Activated T-helper 2 cell treated with anti-CD3 and anti-CD28 coated beads, Interferon-gamma antibody, Interleukin-2, Interleukin-4, amounts not matched to agents 10 μg/mL and 5 μg/mL and 100 μg/mL, durations not matched to agents 14 hours and 24 hours and 36 hours (primary cell): ENCODE measurements at regions of chr1 and their contacts with region 1.

Region 1: GRCh38 chr1:40951943-40952743 is 27.4 kb upstream of the CTPS1 start:
- DNase-seq: peak; percentile 40
- H3K4me3 Mint-ChIP-seq: no peak overlapping the region
- H3K27ac Mint-ChIP-seq: no peak overlapping the region
- H3K4me1 Mint-ChIP-seq: peaks cover 5% of the 10 kb centered on the region
- H3K27me3 Mint-ChIP-seq: peaks cover 22% of the 10 kb centered on the region

Region 2: GRCh38 chr1:40612345-40612831 is 339.8 kb before region 1 on chr1:
- intact Hi-C with region 1: loop called (anchors 10 kb)
- DNase-seq: peak; percentile 53
- H3K4me3 Mint-ChIP-seq: no peak overlapping the region
- H3K27ac Mint-ChIP-seq: no peak overlapping the region
- H3K4me1 Mint-ChIP-seq: no peaks in the 10 kb centered on the region
- H3K27me3 Mint-ChIP-seq: peaks cover 11% of the 10 kb centered on the region

Region 3: GRCh38 chr1:40774266-40774998 is 177.7 kb before region 1 on chr1:
- intact Hi-C with region 1: loop called (anchors 2 kb)
- DNase-seq: peak; percentile 41
- H3K4me3 Mint-ChIP-seq: no peak overlapping the region
- H3K27ac Mint-ChIP-seq: peak overlapping the region; percentile 46
- H3K4me1 Mint-ChIP-seq: peaks cover 5% of the 10 kb centered on the region
- H3K27me3 Mint-ChIP-seq: no peaks in the 10 kb centered on the region

Region 4: GRCh38 chr1:40849801-40850592 is 102.1 kb before region 1 on chr1:
- intact Hi-C with region 1: loop called (anchors 1 kb)
- DNase-seq: peak; percentile 73
- H3K4me3 Mint-ChIP-seq: no peak overlapping the region
- H3K27ac Mint-ChIP-seq: peak overlapping the region; percentile 42
- H3K4me1 Mint-ChIP-seq: peaks cover 19% of the 10 kb centered on the region
- H3K27me3 Mint-ChIP-seq: peaks cover 4% of the 10 kb centered on the region

Region 5: DNA sequence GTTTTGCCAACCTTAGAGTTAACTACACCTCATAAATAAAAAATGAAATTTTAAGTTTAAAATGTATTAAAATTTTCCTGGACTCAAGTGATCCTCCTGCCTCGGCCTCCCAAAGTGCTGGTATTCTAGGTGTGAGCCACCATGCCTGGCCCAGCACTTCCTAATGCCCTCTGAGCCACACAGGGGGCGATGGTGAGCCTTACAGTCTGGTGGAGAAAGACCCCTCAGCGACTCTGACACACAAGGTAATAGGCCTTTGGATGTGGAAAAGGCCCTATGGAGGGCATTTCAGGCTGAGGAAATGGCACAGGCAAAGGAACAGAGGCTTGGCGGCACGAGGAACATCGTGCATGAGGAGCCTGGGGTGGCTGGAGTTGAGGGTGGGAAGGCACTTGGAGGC is 96.6 kb before region 1 on chr1:
- intact Hi-C with region 1: loop called (anchors 1 kb)
- DNase-seq: no peak
- H3K4me3 Mint-ChIP-seq: no peak overlapping the region
- H3K27ac Mint-ChIP-seq: no peak overlapping the region
- H3K4me1 Mint-ChIP-seq: peaks cover under 1% of the 10 kb centered on the region
- H3K27me3 Mint-ChIP-seq: peaks cover 29% of the 10 kb centered on the region